GM12878 (cell line): ENCODE measurements at regions of chr5 and their contacts with region 1.

Region 1: DNA sequence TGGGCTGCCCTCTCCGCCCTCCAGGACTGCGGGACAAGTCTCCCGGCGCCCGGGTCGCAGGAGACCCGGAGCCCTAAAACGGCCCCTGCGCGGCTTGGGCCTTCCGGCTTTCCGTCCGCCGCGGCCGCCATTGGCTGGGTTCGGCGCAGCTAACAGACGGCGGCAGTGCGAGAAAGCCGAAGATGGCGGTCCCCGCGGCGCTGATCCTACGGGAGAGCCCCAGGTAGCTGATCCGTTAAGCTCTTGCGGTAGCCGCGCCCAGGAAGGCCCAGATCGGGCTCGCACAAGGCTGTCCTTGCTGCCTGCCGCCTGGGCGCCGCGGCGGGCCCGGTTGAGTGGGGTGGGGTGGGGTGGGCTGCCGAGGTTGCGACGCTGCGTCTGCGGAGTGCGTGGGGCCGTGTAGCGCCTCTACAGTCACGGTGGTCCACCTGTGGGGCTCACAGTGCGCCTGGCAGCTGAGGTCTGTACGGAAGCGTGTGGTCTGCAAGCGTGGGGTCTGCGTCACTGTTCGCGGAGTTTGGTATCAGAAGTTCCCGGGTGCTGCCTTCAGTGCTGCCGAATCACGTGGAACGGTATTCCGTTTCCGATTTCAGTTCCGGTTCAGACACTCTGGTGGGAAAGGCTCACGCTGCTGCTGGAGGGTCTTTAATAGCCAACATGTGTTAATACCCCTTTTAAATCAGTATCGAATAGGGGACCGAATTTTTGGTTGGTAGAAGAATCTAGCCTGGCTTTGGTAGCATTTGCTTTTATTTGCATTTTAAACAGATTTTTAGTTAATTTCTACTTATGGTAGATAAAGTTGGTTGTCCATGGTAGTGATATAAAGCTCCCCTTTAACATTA is at the start of gene COMMD10:
- DNase-seq: peak; percentile 56
- ATAC-seq: peak; percentile 93
- H3K4me3 ChIP-seq: peak within 1 kb of the TSS; percentile 78
- H3K27ac ChIP-seq: peak within 1 kb of the TSS; percentile 86
- H3K4me1 ChIP-seq: peaks cover 4% of the 10 kb centered on the region; the same call in 1 of the 2 replicates
- H3K27me3 ChIP-seq: no peaks in the 10 kb centered on the region
- CTCF ChIP-seq: no peak
- EP300 ChIP-seq: no peak; a peak in 2 of 4 replicates
- POLR2A ChIP-seq: peak; percentile 96
- RAD21 ChIP-seq: no peak
- polyA plus RNA-seq, gene COMMD10: 57.7 to 98.7 TPM

Region 2: DNA sequence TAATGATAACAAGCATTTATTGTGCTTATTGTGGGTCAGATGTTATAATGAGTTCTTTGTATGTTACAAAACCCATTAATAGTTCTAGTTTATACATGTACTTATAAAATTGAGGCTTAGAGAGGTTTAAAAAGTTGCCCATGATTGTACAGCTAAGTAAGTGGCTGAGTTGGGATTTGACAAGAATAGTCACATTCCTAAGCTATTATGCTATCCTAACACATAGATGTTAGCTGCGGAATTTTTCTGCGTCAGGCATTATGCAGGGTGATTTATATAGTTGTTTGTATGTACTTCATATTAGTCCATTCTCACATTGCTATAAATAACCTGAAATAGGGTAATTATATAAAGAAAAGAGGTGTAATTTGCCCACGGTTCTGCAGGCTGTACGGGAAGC is 12.2 kb after region 1 on chr5:
- CTCF ChIA-PET with region 1: interaction called, 3 read pairs
- POLR2A ChIA-PET with region 1: no interaction called
- RAD21 ChIA-PET with region 1: no interaction called
- SMC1A ChIA-PET with region 1: interaction called, 14 read pairs
- in situ Hi-C with region 1: no loop called
- intact Hi-C with region 1: no loop called
- DNase-seq: no peak
- ATAC-seq: no peak
- H3K4me3 ChIP-seq: no peak overlapping the region
- H3K27ac ChIP-seq: no peak overlapping the region
- H3K4me1 ChIP-seq: no peaks in the 10 kb centered on the region
- H3K27me3 ChIP-seq: no peaks in the 10 kb centered on the region
- CTCF ChIP-seq: no peak
- EP300 ChIP-seq: no peak
- POLR2A ChIP-seq: no peak
- RAD21 ChIP-seq: no peak